ENCODE measurements at regions of chr5 and their contacts with region 1.

Region 1: DNA sequence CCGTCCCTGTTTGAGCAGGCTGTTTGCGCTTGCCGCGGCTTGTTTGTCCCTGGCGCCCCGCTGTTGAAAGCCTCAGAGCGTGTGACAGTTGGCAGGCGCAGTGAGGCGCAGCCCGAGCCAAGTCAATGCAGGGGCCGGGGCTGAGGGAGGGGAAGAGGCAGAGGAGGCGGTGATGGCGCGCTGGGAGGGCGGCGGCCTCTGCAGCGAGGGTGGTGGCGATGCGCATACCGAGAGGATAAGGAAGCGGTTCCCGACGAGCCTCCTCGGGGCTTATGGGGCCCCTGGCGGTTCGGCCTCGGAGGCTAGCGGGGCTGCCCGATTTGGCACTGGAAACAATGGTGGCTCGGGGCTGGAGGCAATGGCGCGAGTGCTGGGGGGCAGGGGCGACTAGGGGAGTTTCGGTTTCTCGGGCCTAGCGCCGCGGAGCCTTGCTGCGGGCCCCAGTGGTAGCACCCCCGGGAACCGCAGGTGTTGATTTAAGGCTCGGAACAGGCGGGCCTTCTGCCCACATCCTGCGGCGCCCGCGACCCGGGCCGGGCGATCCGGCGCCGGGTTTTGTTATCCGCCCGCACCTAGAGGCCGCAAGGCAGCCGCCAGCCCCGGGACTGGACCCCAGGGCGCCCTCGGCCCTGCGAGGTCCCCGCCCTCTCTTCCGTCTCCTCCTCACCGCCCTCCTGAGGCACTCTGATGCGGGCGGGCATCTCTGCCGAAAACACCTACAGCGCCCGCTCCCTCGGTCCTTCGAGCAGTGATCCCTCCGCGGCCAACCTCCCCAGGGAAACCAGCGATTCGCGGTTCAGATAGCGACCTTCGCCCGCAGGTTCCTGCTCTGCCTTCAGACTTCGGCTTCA is 947 bp upstream of the LNPEP start:
- DNase-seq: peak; percentile 98
- ATAC-seq: peak; percentile 68
- H3K4me3 ChIP-seq: peak overlapping the region; percentile 65 to 99 (median 90)
- H3K4me3 Mint-ChIP-seq: peak overlapping the region; percentile 95
- H3K27ac ChIP-seq: peak overlapping the region; percentile 88 to 93
- H3K27ac Mint-ChIP-seq: peak overlapping the region; percentile 99
- H3K4me1 ChIP-seq: peaks cover 49 to 58% of the 10 kb centered on the region in 2 donors
- H3K4me1 Mint-ChIP-seq: peaks cover 62% of the 10 kb centered on the region
- H3K27me3 ChIP-seq: no peaks in the 10 kb centered on the region
- H3K27me3 Mint-ChIP-seq: no peaks in the 10 kb centered on the region
- CTCF ChIP-seq: peak; percentile 13

Region 2: GRCh38 chr5:95296291-95296690 is 1638.6 kb before region 1 on chr5:
- CTCF ChIA-PET with region 1: no interaction called
- POLR2A ChIA-PET with region 1: no interaction called
- intact Hi-C with region 1: no loop called
- DNase-seq: no peak
- ATAC-seq: no peak
- H3K4me3 ChIP-seq: no peak overlapping the region
- H3K4me3 Mint-ChIP-seq: no peak overlapping the region
- H3K27ac ChIP-seq: no peak overlapping the region
- H3K27ac Mint-ChIP-seq: no peak overlapping the region
- H3K4me1 ChIP-seq: no peaks in the 10 kb centered on the region
- H3K4me1 Mint-ChIP-seq: no peaks in the 10 kb centered on the region
- H3K27me3 ChIP-seq: no peaks in the 10 kb centered on the region
- H3K27me3 Mint-ChIP-seq: peaks cover 6% of the 10 kb centered on the region
- CTCF ChIP-seq: no peak

Region 3: DNA sequence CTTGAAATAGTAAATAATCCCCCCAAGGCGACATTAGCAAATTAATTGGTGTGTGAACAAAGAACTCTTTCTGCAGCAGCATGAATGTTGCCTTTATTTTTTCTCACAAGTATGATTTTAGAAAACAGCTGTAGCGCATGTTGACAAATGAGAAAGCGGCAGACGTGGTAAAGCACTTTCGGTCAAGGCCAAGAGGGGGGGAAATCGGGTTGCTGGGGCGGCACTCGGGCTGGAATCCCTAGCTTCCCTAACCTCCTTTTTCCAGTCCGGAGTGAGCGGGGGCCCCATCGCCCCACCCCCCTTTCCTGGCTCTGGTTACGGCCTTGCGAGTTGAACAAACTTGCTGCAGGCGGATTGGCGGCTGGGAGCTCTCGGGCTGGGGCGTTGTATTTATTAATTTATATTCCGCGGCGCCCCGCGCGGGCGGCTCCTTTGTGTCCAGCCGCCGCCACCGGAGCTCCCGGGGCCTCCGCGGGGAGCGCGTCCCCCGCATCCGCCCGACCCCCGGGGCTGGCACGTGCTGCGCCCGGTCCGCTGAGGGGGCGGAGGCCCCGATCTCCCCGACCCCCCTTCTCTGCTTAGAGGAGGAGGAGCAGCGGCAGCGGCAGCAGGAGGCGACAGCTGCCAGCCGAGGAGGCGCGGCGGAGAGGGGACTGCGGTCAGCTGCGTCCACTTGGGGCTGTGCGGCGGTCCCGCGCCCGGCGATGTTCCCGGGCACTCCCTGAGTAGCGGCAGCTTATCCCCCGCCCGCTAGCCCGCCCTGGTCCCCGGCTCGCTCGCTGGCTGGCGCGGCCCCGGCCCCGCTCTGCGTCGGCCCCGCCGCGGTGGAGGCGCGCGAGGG is 1204.0 kb before region 1 on chr5 and contains the start of gene RHOBTB3:
- CTCF ChIA-PET with region 1: no interaction called
- POLR2A ChIA-PET with region 1: no interaction called
- intact Hi-C with region 1: loop called (anchors 5 kb)
- DNase-seq: peak; percentile 61
- ATAC-seq: peak; percentile 70
- H3K4me3 ChIP-seq: peak within 1 kb of the TSS; percentile 51 to 75 (median 60)
- H3K4me3 Mint-ChIP-seq: peak within 1 kb of the TSS; percentile 90
- H3K27ac ChIP-seq: no peak within 1 kb of the TSS
- H3K27ac Mint-ChIP-seq: peak within 1 kb of the TSS; percentile 78
- H3K4me1 ChIP-seq: peaks cover 8 to 13% of the 10 kb centered on the region in 2 donors
- H3K4me1 Mint-ChIP-seq: peaks cover 29% of the 10 kb centered on the region
- H3K27me3 ChIP-seq: peaks cover 0 to 10% (median 6%) of the 10 kb centered on the region in 4 experiments
- H3K27me3 Mint-ChIP-seq: peaks cover 12% of the 10 kb centered on the region
- CTCF ChIP-seq: no peak
- total RNA-seq, gene RHOBTB3: 5.0 and 5.3 TPM in 2 replicates

Region 4: DNA sequence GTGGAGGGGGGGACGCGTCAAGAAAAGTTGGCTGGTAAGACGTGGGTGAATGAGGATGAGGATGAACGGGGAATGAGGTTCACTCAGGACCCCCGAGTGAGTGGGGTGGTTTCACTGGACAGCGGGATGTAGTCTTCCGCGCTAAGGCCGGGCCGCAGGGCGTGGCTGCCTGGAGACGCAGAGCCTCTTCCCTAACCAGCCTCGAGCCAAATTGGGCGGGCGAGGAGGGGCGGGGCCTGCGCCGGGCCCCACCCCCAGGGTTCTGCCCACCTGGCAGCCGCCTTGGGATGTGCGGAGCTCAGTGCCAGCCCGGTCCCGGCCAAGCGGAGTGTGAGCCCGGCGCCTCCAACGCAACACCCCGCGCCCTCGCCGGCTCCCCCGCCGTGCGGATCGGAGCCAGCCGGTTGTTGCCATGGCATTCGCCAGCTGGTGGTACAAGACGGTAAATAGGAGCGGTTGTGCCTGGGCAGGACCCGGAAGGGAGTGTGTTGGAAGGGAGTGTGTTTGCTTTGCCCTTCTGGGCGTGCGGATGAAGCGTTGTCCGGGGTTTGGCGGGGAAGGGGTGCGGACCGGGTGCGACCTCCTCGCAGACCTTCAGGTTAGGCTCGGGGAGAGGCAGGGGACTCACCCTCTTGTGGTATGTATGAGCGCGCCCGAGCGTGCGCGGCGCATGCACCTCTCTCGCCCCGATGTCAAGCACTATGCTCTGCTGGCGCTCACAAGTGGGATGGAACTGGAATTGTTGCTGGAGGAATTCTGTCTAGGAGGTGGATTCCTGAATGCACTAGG is 272.0 kb before region 1 on chr5:
- CTCF ChIA-PET with region 1: no interaction called
- POLR2A ChIA-PET with region 1: no interaction called
- intact Hi-C with region 1: loop called (anchors 1 kb)
- DNase-seq: peak; percentile 91
- ATAC-seq: peak; percentile 74
- H3K4me3 ChIP-seq: peak overlapping the region; percentile 60 to 89 (median 83)
- H3K4me3 Mint-ChIP-seq: peak overlapping the region; percentile 100
- H3K27ac ChIP-seq: peak overlapping the region; percentile 85 to 89
- H3K27ac Mint-ChIP-seq: peak overlapping the region; percentile 100
- H3K4me1 ChIP-seq: peaks cover 16 to 21% of the 10 kb centered on the region in 2 donors
- H3K4me1 Mint-ChIP-seq: peaks cover 53% of the 10 kb centered on the region
- H3K27me3 ChIP-seq: no peaks in the 10 kb centered on the region
- H3K27me3 Mint-ChIP-seq: no peaks in the 10 kb centered on the region
- CTCF ChIP-seq: no peak

Region 5: GRCh38 chr5:96876292-96876850 is 58.6 kb before region 1 on chr5 and contains the start of gene ERAP2:
- CTCF ChIA-PET with region 1: interaction called, 5 read pairs
- POLR2A ChIA-PET with region 1: interaction called, 7 read pairs
- intact Hi-C with region 1: loop called (anchors 1 kb)
- DNase-seq: peak; percentile 76
- ATAC-seq: peak; percentile 65
- H3K4me3 ChIP-seq: peak within 1 kb of the TSS; percentile 66 to 100 (median 84)
- H3K4me3 Mint-ChIP-seq: peak within 1 kb of the TSS; percentile 97
- H3K27ac ChIP-seq: peak within 1 kb of the TSS; percentile 69 to 75
- H3K27ac Mint-ChIP-seq: peak within 1 kb of the TSS; percentile 92
- H3K4me1 ChIP-seq: peaks cover 50 to 53% of the 10 kb centered on the region in 2 donors
- H3K4me1 Mint-ChIP-seq: peaks cover 74% of the 10 kb centered on the region
- H3K27me3 ChIP-seq: no peaks in the 10 kb centered on the region
- H3K27me3 Mint-ChIP-seq: no peaks in the 10 kb centered on the region
- CTCF ChIP-seq: no peak
- total RNA-seq, gene ERAP2: 74.2 and 76.5 TPM in 2 replicates

Region 6: DNA sequence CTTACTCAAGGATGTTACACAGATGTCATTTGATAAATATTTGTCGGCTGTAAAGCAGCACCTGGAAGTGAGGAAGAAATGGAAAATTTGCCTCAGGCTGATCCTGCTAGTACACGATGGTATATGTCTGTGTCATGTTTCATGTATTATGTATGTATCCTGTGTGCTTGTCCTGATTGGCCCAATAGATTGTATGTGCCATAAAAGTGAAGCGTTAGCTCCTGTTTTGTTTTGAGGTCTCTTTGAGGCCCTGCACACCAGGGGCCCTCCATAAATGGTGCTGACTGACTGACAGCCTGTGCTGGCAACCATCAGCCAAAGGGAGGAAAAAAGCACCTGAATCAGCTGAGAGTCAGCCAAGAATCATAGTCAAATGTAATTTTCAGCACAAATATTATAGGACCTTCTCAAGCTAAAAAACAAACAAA is 10.9 kb before region 1 on chr5:
- CTCF ChIA-PET with region 1: interaction called, 4 read pairs
- POLR2A ChIA-PET with region 1: interaction called, 3 read pairs
- intact Hi-C with region 1: loop called (anchors 1 kb)
- DNase-seq: no peak
- ATAC-seq: no peak
- H3K4me3 ChIP-seq: no peak overlapping the region
- H3K4me3 Mint-ChIP-seq: peak overlapping the region; percentile 17
- H3K27ac ChIP-seq: peak overlapping the region in 1 of 2 donors; percentile 34
- H3K27ac Mint-ChIP-seq: peak overlapping the region; percentile 21
- H3K4me1 ChIP-seq: peaks cover 21 to 28% of the 10 kb centered on the region in 2 donors
- H3K4me1 Mint-ChIP-seq: peaks cover 58% of the 10 kb centered on the region
- H3K27me3 ChIP-seq: no peaks in the 10 kb centered on the region
- H3K27me3 Mint-ChIP-seq: no peaks in the 10 kb centered on the region
- CTCF ChIP-seq: no peak

Region 7: DNA sequence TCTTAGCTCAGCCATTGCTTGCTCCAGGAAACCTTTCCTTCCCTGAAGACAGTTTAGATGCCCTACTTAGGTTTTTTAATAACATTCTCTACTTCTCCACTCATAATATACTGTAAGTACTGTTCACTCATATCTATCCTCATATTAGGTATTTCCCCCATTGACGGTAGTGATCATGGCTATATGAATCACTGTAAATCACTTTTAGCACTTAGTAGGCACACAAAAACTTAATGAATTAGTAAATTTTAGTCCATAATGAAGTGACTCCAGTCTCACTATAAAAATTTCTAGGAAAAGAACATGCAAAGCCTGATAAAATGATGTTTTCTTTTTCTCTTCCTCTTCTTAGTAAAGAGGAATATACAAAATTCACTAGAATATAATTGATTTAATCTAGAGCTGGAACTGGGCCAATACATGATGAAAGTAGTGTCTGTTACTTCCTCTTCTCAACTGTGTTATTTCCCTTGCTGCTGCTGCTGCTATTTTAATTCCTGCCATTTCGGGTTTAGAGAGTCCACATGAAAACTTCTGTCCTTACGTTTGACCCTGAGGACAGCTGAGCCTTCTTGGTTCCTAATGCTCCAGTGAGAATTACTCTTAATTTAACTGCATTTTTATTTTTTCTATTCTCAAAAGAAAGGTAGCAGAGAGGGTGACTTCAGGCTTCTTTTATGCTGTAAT is 74.4 kb after region 1 on chr5:
- CTCF ChIA-PET with region 1: no interaction called
- POLR2A ChIA-PET with region 1: no interaction called
- intact Hi-C with region 1: loop called (anchors 2 kb)
- DNase-seq: peak; percentile 81
- ATAC-seq: peak; percentile 68
- H3K4me3 ChIP-seq: peak overlapping the region in 2 of 5 experiments; percentile 11 to 44
- H3K4me3 Mint-ChIP-seq: peak overlapping the region; percentile 69
- H3K27ac ChIP-seq: peak overlapping the region; percentile 65 to 88
- H3K27ac Mint-ChIP-seq: peak overlapping the region; percentile 81
- H3K4me1 ChIP-seq: peaks cover 16 to 23% of the 10 kb centered on the region in 2 donors
- H3K4me1 Mint-ChIP-seq: peaks cover 26% of the 10 kb centered on the region
- H3K27me3 ChIP-seq: no peaks in the 10 kb centered on the region
- H3K27me3 Mint-ChIP-seq: no peaks in the 10 kb centered on the region
- CTCF ChIP-seq: no peak

Region 8: DNA sequence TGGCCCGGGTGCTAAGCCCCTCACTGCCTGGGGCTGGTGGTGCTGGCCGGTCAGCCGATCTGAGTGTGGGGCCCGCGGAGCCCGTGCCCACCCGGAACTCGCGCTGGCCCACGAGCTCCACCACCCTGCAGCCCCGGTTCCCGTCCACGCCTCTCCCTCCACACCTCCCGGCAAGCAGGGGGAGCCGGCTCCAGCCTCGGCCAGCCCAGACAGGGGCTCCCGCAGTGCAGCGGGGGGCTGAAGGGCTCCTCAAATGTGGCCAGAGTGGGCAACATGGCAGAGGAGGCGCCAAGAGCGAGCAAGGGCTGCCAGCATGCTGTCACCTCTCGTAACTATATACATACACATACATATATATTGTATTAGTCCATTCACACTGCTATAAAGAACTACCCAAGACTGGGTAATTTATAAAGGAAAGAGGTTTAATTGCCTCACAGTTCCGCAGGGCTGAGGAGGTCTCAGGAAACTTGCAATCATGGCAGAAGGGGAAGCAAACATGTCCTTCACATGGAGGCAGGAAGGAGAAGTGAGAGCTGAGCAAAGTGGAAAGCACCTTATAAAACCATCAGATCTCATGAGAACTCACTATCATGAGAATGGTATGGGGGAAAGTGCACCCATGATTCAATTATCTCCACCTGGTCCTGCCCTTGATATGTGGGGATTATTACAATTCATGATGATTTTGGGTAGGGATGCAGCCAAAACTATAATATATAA is 150.7 kb after region 1 on chr5:
- CTCF ChIA-PET with region 1: no interaction called
- POLR2A ChIA-PET with region 1: no interaction called
- intact Hi-C with region 1: no loop called
- DNase-seq: peak; percentile 62
- ATAC-seq: peak; percentile 28
- H3K4me3 ChIP-seq: no peak overlapping the region
- H3K4me3 Mint-ChIP-seq: no peak overlapping the region
- H3K27ac ChIP-seq: peak overlapping the region in 1 of 2 donors; percentile 3
- H3K27ac Mint-ChIP-seq: peak overlapping the region; percentile 12
- H3K4me1 ChIP-seq: peaks cover 14 to 24% of the 10 kb centered on the region in 2 donors
- H3K4me1 Mint-ChIP-seq: peaks cover 19% of the 10 kb centered on the region
- H3K27me3 ChIP-seq: no peaks in the 10 kb centered on the region
- H3K27me3 Mint-ChIP-seq: no peaks in the 10 kb centered on the region
- CTCF ChIP-seq: no peak

Region 9: GRCh38 chr5:98773464-98774191 is 1838.7 kb after region 1 on chr5 and contains the start of gene RGMB:
- CTCF ChIA-PET with region 1: no interaction called
- POLR2A ChIA-PET with region 1: no interaction called
- intact Hi-C with region 1: loop called (anchors 5 kb)
- DNase-seq: peak; percentile 96
- ATAC-seq: peak; percentile 88
- H3K4me3 ChIP-seq: peak within 1 kb of the TSS; percentile 55 to 94 (median 78)
- H3K4me3 Mint-ChIP-seq: peak within 1 kb of the TSS; percentile 96
- H3K27ac ChIP-seq: peak within 1 kb of the TSS; percentile 63 to 78
- H3K27ac Mint-ChIP-seq: peak within 1 kb of the TSS; percentile 93
- H3K4me1 ChIP-seq: peaks cover 38 to 53% of the 10 kb centered on the region in 2 donors
- H3K4me1 Mint-ChIP-seq: peaks cover 56% of the 10 kb centered on the region
- H3K27me3 ChIP-seq: peaks cover 0 to 17% (median 8%) of the 10 kb centered on the region in 4 experiments
- H3K27me3 Mint-ChIP-seq: peaks cover under 1% of the 10 kb centered on the region
- CTCF ChIP-seq: no peak
- total RNA-seq, gene RGMB: 17.1 and 18.3 TPM in 2 replicates